MCF 10A (cell line): ENCODE measurements at regions of chr2 and their contacts with region 1.

Region 1: DNA sequence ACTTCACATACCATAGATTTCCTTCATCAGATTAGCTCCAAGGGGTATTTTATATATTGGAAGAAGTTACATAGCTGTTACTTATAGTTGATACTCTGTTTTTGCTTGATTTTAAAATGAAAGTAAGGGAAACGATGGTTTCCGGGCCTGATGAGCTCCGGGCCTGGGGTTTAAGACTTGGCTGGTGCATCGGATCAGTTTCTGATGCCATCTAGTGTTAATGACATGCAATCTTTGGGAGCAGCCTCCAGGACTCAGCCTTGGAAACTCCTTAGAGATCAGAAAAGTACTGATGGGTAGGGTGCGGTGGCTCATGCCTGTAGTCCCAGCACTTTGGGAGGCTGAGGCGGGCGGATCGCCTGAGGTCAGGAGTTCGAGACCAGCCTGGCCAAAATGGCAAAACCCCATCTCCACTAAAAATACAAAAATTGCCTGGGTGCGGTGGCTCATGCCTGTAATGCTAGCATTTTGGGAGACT is 47.1 kb upstream of the CNOT11 start:
- DNase-seq: peak; percentile 89
- H3K4me3 Mint-ChIP-seq: peak overlapping the region; percentile 39
- H3K27ac Mint-ChIP-seq: peak overlapping the region; percentile 63
- H3K4me1 Mint-ChIP-seq: no peaks in the 10 kb centered on the region
- H3K27me3 Mint-ChIP-seq: no peaks in the 10 kb centered on the region
- CTCF ChIP-seq: peak; percentile 39

Region 2: DNA sequence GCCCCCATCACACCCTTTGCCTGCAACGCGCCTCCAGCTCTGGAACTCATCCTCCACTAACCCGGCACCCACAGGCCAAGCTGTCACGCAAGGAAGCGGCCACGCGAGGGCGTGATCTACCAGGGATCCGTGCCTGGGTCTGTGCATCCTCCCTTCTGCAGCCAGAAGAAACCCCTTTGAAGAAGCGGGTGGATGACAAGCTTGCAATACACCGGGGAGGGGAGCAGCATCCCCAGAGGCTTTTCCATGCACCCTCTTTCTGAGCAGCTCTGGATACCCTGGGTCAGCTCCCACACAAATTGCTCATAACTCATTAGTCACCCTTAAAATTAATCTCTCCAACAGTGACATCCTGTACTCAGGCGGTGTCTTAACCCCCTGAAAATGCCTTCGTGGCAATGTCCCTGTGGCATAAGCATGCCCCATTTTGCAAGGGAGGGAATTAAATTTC is 595.2 kb before region 1 on chr2:
- CTCF ChIA-PET with region 1: interaction called, 4 read pairs
- POLR2A ChIA-PET with region 1: no interaction called
- intact Hi-C with region 1: loop called (anchors 2 kb)
- DNase-seq: peak; percentile 61
- H3K4me3 Mint-ChIP-seq: no peak overlapping the region
- H3K27ac Mint-ChIP-seq: no peak overlapping the region
- H3K4me1 Mint-ChIP-seq: peaks cover 5% of the 10 kb centered on the region
- H3K27me3 Mint-ChIP-seq: peaks cover 13% of the 10 kb centered on the region
- CTCF ChIP-seq: peak; percentile 67

Region 3: DNA sequence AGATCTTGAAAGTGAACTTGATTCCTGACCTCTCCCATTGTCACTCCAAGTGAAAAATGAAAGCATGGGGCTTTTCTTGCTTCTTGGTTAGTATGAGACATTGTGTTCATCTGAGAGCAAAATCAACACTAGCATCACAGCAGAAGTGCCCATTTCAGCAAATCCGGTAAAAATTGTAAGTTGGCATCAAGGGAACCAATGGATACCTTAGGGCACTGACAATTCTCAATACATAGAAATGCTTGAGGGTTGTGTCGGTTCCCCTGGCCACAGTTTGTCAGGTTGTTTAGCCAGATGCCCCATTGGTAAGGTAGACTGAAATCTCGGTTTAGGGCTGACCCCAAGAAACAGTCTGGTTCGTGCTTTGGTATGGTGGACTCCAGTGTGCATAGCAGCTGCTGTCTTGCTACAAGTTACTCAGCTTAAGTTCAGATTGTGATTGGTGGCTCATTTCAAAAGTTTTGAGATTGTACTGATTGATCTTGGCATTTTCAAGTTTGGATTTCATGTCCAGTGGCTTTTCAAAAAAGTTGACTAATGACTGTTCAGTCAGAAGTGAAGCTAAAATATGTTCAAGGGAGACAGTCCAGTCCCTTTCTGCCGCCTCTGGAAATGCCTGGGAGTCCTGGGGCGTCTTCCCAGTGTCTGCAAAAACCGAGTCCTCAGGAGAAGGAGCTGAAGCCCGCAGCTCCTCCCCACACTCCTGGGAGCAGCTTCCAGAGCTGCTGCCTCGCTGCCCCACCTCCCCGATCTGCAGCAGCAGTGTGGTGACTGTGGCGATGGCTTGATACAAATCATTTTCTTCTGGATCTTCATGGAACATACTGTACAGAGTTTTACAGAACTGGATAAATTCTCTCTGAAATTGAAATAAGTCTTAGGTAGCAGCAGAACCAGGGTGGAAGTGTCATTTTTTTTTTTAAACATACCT is 197.9 kb before region 1 on chr2:
- CTCF ChIA-PET with region 1: interaction called, 56 read pairs
- POLR2A ChIA-PET with region 1: interaction called, 14 read pairs
- intact Hi-C with region 1: loop called (anchors 1 kb)
- DNase-seq: no peak
- H3K4me3 Mint-ChIP-seq: no peak overlapping the region
- H3K27ac Mint-ChIP-seq: no peak overlapping the region
- H3K4me1 Mint-ChIP-seq: peaks cover 17% of the 10 kb centered on the region
- H3K27me3 Mint-ChIP-seq: no peaks in the 10 kb centered on the region
- CTCF ChIP-seq: no peak

Region 4: GRCh38 chr2:101030863-101031554 is 174.6 kb before region 1 on chr2:
- CTCF ChIA-PET with region 1: interaction called, 69 read pairs
- POLR2A ChIA-PET with region 1: no interaction called
- intact Hi-C with region 1: loop called (anchors 1 kb)
- DNase-seq: no peak
- H3K4me3 Mint-ChIP-seq: no peak overlapping the region
- H3K27ac Mint-ChIP-seq: no peak overlapping the region
- H3K4me1 Mint-ChIP-seq: no peaks in the 10 kb centered on the region
- H3K27me3 Mint-ChIP-seq: no peaks in the 10 kb centered on the region
- CTCF ChIP-seq: no peak

Region 5: DNA sequence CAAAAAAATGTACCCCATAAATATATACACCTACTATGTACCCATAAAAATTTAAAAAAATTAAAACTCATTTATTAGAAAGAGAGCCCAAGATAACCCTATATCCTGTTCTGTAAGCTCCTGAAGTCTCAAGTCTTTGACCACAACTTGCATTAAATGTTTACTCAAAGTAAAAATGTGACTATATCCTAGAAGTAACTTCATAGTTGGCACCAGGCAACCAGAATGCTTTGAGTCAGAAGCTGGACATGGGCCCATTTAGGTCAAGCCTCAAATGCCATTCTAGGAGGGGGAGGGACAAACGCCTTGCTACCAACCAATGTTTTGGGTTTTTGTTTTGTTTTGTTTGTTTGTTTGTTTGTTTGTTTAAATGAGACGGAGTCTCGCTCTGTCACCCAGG is 45.1 kb before region 1 on chr2:
- CTCF ChIA-PET with region 1: interaction called, 107 read pairs
- POLR2A ChIA-PET with region 1: interaction called, 22 read pairs
- intact Hi-C with region 1: loop called (anchors 2 kb)
- DNase-seq: peak; percentile 88
- H3K4me3 Mint-ChIP-seq: no peak overlapping the region
- H3K27ac Mint-ChIP-seq: peak overlapping the region; percentile 71
- H3K4me1 Mint-ChIP-seq: peaks cover 8% of the 10 kb centered on the region
- H3K27me3 Mint-ChIP-seq: no peaks in the 10 kb centered on the region
- CTCF ChIP-seq: no peak

Region 6: GRCh38 chr2:101223814-101224231 is 18.3 kb after region 1 on chr2:
- CTCF ChIA-PET with region 1: interaction called, 19 read pairs
- POLR2A ChIA-PET with region 1: interaction called, 3 read pairs
- intact Hi-C with region 1: no loop called
- DNase-seq: no peak
- H3K4me3 Mint-ChIP-seq: no peak overlapping the region
- H3K27ac Mint-ChIP-seq: no peak overlapping the region
- H3K4me1 Mint-ChIP-seq: no peaks in the 10 kb centered on the region
- H3K27me3 Mint-ChIP-seq: no peaks in the 10 kb centered on the region
- CTCF ChIP-seq: no peak

Region 7: DNA sequence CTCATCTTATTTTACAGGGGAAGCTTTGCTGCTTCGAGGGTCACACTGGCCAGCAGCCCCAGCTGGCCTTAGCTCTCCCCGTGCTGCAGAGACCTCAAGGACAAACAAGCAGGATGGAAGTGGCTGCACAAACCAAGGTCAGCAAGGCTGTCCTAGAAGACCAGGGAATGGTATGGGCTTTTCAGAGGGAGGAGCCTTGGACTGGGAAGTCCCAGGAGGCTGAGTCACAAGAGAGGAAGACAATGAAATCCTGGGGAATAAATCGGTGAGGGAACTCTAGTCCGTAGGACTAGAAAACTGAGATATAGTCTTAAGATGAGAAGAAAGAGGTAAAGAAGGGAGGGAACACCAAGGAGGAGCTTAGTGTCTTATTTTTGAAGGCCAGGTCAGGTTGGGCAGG is 166.1 kb after region 1 on chr2:
- CTCF ChIA-PET with region 1: no interaction called
- POLR2A ChIA-PET with region 1: no interaction called
- intact Hi-C with region 1: no loop called
- DNase-seq: no peak
- H3K4me3 Mint-ChIP-seq: no peak overlapping the region
- H3K27ac Mint-ChIP-seq: no peak overlapping the region
- H3K4me1 Mint-ChIP-seq: no peaks in the 10 kb centered on the region
- H3K27me3 Mint-ChIP-seq: no peaks in the 10 kb centered on the region
- CTCF ChIP-seq: no peak